Activated CD4-positive, alpha-beta memory T cell treated with anti-CD3 and anti-CD28 coated beads for 36 hours (primary cell): ENCODE measurements at regions of chr12 and their contacts with region 1.

Region 1: GRCh38 chr12:108691175-108691997 is 39.9 kb downstream of the CORO1C start:
- DNase-seq: peak; percentile 91
- H3K4me3 Mint-ChIP-seq: peak overlapping the region; percentile 56
- H3K27ac Mint-ChIP-seq: peak overlapping the region; percentile 94
- H3K4me1 Mint-ChIP-seq: peaks cover 70% of the 10 kb centered on the region
- H3K27me3 Mint-ChIP-seq: no peaks in the 10 kb centered on the region

Region 2: DNA sequence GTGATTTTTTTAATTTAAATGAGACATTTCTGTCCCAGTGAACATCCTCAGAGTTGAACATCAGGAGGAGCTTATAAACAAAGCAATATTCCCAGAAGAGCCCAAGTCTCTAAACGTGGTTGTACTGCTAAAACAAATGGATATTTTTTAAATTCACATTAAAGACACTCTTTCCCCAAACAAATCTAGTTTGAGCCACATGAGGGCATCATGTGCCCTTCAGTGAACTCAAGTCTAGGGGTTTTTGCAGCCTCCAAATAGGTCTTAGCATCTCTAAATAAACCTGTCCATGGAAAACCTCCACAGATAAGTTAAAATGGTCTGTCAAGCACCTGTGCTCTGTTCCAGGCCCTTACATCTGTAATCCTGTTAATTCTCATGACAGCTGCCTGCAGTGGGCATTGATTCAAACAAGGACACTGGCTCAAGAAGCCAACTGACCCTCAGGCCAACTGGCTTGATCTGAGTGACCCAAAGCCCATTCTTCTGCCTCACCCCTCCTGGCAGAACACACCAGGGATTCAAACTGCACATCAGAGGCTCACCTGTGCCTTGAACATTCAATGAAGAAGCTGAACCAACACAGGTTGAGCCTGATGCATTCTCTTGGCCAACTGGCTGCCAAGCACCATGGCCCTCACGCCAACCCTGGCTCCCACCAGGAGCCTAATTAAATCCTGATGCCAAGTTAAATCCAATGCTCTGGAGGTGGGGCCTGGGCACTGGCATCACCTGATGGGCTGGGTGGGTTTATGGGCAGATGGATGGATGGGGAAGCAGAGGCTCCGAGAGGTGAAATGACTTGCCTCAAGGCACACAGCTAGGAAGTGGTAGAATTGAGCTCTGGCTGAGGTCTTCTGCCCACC is 120.4 kb before region 1 on chr12:
- CTCF ChIA-PET with region 1: no interaction called
- POLR2A ChIA-PET with region 1: no interaction called
- intact Hi-C with region 1: loop called (anchors 1 kb)
- DNase-seq: peak; percentile 18
- H3K4me3 Mint-ChIP-seq: no peak overlapping the region
- H3K27ac Mint-ChIP-seq: no peak overlapping the region
- H3K4me1 Mint-ChIP-seq: peaks cover 76% of the 10 kb centered on the region
- H3K27me3 Mint-ChIP-seq: no peaks in the 10 kb centered on the region

Region 3: DNA sequence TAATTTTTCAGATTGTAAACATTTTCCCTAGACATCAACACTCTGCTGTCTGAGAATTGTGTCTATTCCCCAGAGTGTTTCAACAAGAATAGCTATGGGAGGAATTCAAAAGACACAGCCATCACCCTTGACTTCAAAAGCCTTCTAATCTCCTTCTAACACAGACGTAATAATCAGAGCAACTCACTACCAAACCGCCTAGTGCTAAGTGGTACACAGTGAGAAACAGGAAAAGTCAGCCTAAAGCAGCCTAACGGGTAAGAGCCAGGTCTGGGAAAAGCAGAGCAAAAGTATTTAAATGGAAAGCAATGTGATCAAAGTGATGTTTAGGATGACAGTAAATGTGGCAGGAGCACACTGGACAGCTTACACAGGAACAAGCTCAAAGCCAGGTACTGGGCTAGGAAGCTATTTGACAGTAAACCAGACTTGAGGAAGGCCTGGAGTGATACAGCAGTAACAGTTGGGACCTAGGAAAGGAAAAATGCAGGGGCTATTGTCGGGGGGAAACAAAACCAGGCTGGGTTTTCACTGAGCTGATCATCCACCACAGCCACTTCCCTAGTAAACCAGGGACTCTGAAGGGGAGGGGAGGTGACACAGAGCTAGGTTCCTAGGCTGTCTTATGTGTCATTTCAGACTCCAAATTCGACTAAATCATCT is 10.5 kb after region 1 on chr12:
- CTCF ChIA-PET with region 1: interaction called, 8 read pairs
- POLR2A ChIA-PET with region 1: interaction called, 27 read pairs
- intact Hi-C with region 1: loop called (anchors 2 kb)
- DNase-seq: peak; percentile 43
- H3K4me3 Mint-ChIP-seq: no peak overlapping the region
- H3K27ac Mint-ChIP-seq: no peak overlapping the region
- H3K4me1 Mint-ChIP-seq: peaks cover 19% of the 10 kb centered on the region
- H3K27me3 Mint-ChIP-seq: no peaks in the 10 kb centered on the region

Region 4: GRCh38 chr12:108731105-108731865 is 39.9 kb after region 1 on chr12 and contains the start of gene CORO1C:
- CTCF ChIA-PET with region 1: interaction called, 6 read pairs
- POLR2A ChIA-PET with region 1: interaction called, 23 read pairs
- intact Hi-C with region 1: loop called (anchors 1 kb)
- DNase-seq: peak; percentile 97
- H3K4me3 Mint-ChIP-seq: peak within 1 kb of the TSS; percentile 91
- H3K27ac Mint-ChIP-seq: peak within 1 kb of the TSS; percentile 91
- H3K4me1 Mint-ChIP-seq: peaks cover 34% of the 10 kb centered on the region
- H3K27me3 Mint-ChIP-seq: no peaks in the 10 kb centered on the region
- total RNA-seq, gene CORO1C: 62.1 to 70.9 TPM

Region 5: GRCh38 chr12:108793756-108794441 is 102.5 kb after region 1 on chr12:
- CTCF ChIA-PET with region 1: no interaction called
- POLR2A ChIA-PET with region 1: no interaction called
- intact Hi-C with region 1: no loop called
- DNase-seq: no peak
- H3K4me3 Mint-ChIP-seq: no peak overlapping the region
- H3K27ac Mint-ChIP-seq: no peak overlapping the region
- H3K4me1 Mint-ChIP-seq: peaks cover 2% of the 10 kb centered on the region
- H3K27me3 Mint-ChIP-seq: no peaks in the 10 kb centered on the region

Region 6: DNA sequence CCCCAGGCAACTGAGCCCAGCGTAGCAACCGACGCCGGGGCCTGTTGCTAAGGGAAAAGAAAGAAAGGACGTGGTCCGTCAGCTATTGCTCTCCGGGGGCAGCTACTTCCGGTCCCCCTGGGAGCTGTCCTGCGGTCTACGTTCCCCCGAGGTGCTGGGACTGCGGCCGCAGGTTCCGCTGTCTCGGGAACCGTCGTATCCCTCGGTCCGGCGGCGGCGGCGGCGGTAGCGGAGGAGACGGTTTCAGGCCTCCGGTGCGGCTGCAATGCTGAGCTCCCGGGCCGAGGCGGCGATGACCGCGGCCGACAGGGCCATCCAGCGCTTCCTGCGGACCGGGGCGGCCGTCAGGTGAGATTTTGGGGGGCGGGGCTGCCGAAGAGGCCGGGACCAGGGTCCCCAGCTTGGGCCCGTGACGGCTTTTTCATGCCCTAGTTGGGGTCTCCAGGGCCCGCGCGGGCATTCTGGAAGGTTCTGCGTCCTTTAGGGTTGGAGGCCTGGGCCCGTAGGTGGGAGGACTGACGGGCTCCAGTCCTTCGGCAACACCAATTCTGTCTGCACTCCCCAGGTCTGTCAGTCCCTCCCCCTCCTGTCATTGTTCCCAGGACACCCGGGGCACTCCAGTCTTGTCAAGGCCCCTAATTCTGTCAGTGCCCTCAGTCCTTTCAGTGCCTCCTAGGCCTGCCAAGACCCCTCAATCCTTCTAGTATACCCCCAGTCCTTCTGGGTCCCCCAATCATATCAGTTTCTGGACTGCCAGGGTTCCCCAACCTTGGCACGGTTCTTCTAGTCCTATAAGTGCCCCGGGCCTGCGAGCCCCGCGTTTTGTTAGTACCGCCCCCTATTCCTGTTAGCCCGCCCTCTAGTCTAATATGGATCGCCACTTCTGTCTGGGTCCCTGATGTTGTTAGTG is 361.3 kb after region 1 on chr12 and contains the start of gene USP30:
- CTCF ChIA-PET with region 1: no interaction called
- POLR2A ChIA-PET with region 1: no interaction called
- intact Hi-C with region 1: loop called (anchors 5 kb)
- DNase-seq: peak; percentile 89
- H3K4me3 Mint-ChIP-seq: peak within 1 kb of the TSS; percentile 89
- H3K27ac Mint-ChIP-seq: peak within 1 kb of the TSS; percentile 97
- H3K4me1 Mint-ChIP-seq: peaks cover 15% of the 10 kb centered on the region
- H3K27me3 Mint-ChIP-seq: no peaks in the 10 kb centered on the region
- total RNA-seq, gene USP30: 11.4 to 11.8 TPM